Activated CD8-positive, alpha-beta T cell treated with anti-CD3 and anti-CD28 coated beads for 36 hours (primary cell): ENCODE measurements at regions of chr10 and their contacts with region 1.

Region 1: GRCh38 chr10:114304017-114304570 is 65.0 kb downstream of the VWA2 start:
- DNase-seq: peak; percentile 92
- ATAC-seq: peak; percentile 72
- H3K4me3 Mint-ChIP-seq: peak overlapping the region; percentile 86
- H3K27ac Mint-ChIP-seq: peak overlapping the region; percentile 89
- H3K4me1 Mint-ChIP-seq: peaks cover 13% of the 10 kb centered on the region
- H3K27me3 Mint-ChIP-seq: no peaks in the 10 kb centered on the region
- CTCF ChIP-seq: peak; percentile 62

Region 2: DNA sequence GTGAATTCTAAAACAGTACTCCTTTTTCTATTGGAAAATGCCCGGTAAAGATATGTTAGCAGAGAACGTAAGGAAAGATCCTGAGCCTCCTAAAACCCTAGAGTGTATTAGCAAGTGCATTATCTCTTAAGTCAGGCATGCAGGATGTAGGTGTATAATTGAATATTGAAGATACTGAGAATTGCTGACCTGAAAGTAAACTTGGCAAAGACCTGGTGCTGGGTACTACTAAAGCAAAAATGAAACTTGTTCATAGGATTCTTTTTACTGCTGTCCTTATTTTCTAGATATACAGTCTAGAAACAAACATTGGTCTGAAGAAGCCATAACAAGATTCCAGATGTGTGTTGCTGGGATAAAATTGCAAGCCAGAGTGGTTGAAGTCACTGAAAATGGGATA is 83.8 kb before region 1 on chr10:
- CTCF ChIA-PET with region 1: no interaction called
- POLR2A ChIA-PET with region 1: no interaction called
- intact Hi-C with region 1: no loop called
- DNase-seq: no peak
- ATAC-seq: no peak
- H3K4me3 Mint-ChIP-seq: no peak overlapping the region
- H3K27ac Mint-ChIP-seq: no peak overlapping the region
- H3K4me1 Mint-ChIP-seq: no peaks in the 10 kb centered on the region
- H3K27me3 Mint-ChIP-seq: peaks cover 14% of the 10 kb centered on the region
- CTCF ChIP-seq: no peak

Region 3: DNA sequence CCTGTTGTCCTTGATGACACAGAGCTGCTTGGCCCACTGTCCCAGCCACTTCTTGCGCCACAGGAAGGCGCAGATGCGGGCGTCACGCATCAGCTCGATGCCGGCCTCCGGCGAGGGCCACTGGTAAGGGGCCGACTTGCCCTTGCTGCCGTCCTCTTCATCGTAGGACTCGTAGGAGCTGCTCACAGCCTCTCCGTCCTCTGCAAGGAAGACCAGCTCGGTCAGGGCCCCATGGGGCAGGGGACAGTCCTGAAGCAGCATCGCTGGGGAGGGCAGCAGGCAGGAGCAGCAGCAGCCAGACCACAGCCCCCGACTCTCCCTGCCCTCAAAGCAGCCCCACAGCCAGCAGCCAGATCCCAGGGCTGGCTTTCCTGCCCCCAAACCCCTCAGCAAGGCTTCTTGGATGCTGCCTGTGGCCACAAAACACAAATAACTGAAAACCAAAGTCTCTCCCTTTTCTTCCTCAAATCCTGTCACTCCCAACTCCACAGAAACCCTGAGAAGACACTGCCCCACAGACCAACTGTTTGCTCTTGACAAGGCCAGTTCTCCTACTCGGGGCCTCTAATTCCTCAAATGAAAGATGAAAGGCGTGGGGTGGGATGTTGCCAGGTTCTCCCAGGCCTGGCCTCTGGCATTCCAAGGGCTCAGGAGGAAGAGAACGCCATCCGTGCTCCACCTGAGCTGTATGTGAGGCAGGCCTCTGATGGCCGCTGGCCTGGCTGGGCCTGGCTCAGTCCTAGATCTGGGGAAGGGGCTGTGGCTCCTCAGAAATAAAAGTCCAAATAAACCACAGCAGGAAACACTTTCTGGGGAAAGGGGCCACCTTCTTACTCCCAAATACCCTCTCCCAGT is 11.7 kb after region 1 on chr10:
- CTCF ChIA-PET with region 1: interaction called, 11 read pairs
- POLR2A ChIA-PET with region 1: no interaction called
- intact Hi-C with region 1: no loop called
- DNase-seq: no peak
- ATAC-seq: no peak
- H3K4me3 Mint-ChIP-seq: no peak overlapping the region
- H3K27ac Mint-ChIP-seq: no peak overlapping the region
- H3K4me1 Mint-ChIP-seq: no peaks in the 10 kb centered on the region
- H3K27me3 Mint-ChIP-seq: no peaks in the 10 kb centered on the region
- CTCF ChIP-seq: no peak

Region 4: GRCh38 chr10:114388275-114388674 is 84.2 kb after region 1 on chr10:
- CTCF ChIA-PET with region 1: interaction called, 16 read pairs
- POLR2A ChIA-PET with region 1: no interaction called
- intact Hi-C with region 1: no loop called
- DNase-seq: peak; percentile 58
- ATAC-seq: peak; percentile 91
- H3K4me3 Mint-ChIP-seq: no peak overlapping the region
- H3K27ac Mint-ChIP-seq: peak overlapping the region; percentile 63
- H3K4me1 Mint-ChIP-seq: peaks cover 22% of the 10 kb centered on the region
- H3K27me3 Mint-ChIP-seq: peaks cover 8% of the 10 kb centered on the region
- CTCF ChIP-seq: no peak

Region 5: DNA sequence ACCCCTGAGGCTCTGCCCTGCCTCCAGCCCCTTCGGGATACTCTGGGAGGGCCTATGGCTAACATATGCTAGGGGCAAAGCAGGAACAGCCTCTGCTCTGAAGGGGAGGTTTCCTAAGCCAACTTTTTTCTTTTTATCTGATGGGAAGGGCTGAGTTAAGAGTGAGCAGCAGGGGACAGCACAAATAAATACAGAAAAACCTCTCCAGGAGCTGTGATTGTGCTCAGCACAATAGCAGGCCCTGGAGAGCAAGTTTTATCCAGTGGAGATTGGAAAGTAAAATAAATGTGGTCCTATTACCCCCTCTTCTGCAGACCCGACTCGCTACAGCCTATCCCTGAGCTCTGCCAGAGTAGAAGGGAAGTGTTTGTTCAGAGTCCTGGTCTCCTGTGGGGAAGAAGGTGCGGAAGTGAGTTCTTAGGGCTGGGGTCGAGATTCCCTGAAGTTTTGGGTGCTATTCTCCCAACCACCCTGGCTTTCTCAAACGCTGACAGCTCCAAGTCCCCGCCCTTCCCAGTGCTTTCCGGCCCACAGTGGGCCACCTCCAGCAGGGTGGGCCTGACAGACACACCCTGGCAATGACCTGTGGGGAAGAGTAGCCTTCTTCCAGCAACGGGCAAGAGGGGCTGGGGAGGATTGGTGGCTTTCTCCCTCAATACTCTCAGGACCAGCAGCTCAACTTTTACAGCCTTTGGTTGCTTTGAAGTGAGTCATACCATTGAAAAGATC is 123.2 kb after region 1 on chr10:
- CTCF ChIA-PET with region 1: interaction called, 9 read pairs
- POLR2A ChIA-PET with region 1: no interaction called
- intact Hi-C with region 1: loop called (anchors 5 kb)
- DNase-seq: no peak
- ATAC-seq: no peak
- H3K4me3 Mint-ChIP-seq: no peak overlapping the region
- H3K27ac Mint-ChIP-seq: no peak overlapping the region
- H3K4me1 Mint-ChIP-seq: peaks cover 3% of the 10 kb centered on the region
- H3K27me3 Mint-ChIP-seq: no peaks in the 10 kb centered on the region
- CTCF ChIP-seq: no peak

Region 6: DNA sequence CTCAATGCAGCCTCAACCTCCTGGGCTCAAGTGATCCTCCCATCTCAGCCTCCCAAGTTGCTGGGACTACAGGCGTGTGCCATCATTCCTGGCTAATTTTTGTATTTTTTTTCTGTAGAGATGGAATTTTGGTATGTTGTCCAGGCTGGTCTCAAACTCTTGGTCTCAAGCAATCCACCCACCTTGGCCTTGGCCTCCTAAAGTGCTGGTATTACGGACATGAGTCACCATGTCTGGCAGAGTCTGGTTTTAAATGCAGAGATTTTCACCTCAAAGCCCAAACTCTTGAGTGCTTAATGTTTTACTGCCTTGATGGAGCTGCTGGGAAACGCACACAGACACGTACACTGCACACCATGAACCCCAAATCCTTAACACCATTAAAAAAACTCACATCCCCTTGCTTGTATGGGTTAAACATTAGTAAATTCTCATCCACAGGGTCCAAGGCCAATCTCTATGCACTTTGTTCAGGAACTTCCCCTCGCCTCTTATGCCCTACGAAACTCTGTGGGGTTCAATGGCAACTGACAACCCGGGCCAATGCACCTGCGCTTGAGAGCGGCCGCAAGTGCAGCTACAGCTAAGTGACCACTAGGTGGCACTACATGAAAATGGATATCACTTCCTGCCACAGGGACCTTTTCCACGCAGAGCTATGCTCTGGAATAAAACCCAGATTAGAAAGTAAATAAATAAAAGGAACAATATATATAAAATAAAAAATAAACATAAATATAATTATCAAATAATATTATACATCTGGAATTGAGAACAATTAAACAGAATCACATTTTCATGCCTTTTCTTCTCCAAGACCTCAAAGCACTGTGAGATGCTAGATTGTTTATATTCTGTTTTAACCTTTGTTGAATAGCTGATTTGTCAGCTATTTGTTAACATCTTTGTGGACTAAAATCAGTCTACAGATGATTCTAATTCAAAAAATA is 167.1 kb after region 1 on chr10:
- CTCF ChIA-PET with region 1: interaction called, 28 read pairs
- POLR2A ChIA-PET with region 1: no interaction called
- intact Hi-C with region 1: no loop called
- DNase-seq: peak; percentile 72
- ATAC-seq: peak; percentile 89
- H3K4me3 Mint-ChIP-seq: no peak overlapping the region
- H3K27ac Mint-ChIP-seq: peak overlapping the region; percentile 65
- H3K4me1 Mint-ChIP-seq: peaks cover 23% of the 10 kb centered on the region
- H3K27me3 Mint-ChIP-seq: no peaks in the 10 kb centered on the region
- CTCF ChIP-seq: peak; percentile 97

Region 7: GRCh38 chr10:114694752-114695151 is 390.7 kb after region 1 on chr10:
- CTCF ChIA-PET with region 1: interaction called, 11 read pairs
- POLR2A ChIA-PET with region 1: no interaction called
- intact Hi-C with region 1: no loop called
- DNase-seq: peak; percentile 50
- ATAC-seq: peak; percentile 49
- H3K4me3 Mint-ChIP-seq: no peak overlapping the region
- H3K27ac Mint-ChIP-seq: no peak overlapping the region
- H3K4me1 Mint-ChIP-seq: peaks cover 9% of the 10 kb centered on the region
- H3K27me3 Mint-ChIP-seq: peaks cover 2% of the 10 kb centered on the region
- CTCF ChIP-seq: peak; percentile 75